Astrocyte of the cerebellum (primary cell): ENCODE measurements at regions of chr2 and their contacts with region 1.

Region 1: GRCh38 chr2:197297772-197298318 is 12.7 kb downstream of the ANKRD44 start:
- DNase-seq: no peak
- H3K4me3 ChIP-seq: no peak overlapping the region
- CTCF ChIP-seq: no peak

Region 2: DNA sequence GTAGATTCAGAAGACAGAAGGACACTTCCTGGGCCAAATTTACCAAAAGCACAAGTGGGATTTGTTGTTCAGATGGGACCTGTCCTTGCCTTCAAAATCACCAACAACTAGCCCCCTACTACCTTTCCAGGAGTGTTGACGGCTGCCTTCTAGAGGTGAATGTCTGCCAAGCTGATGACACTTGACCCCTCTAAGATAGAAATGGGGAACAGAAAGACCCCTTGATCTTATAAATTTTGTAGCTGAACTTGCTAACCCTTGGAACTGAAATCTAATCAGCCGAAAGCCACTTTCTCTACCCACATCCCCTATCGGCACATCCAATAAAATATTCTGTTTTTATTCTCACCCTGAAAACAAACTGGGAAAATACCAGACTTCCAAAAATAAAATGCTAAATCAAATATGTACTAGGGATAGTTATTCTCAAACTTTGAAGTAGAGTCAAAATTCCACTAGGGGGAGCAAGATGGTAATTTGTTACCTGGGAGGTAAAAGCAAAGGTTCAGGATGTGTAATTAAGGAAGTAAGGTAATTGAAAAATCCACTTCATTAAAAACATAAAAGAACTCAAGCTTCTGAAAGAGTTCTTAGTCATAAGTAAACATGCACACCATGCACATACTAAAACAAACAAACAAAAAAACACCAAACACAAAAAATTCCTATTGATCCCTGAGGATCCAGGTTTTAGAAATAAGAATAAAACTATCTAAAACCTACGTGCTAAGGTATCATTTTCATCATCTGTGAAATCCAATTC is 106.5 kb before region 1 on chr2:
- in situ Hi-C with region 1: loop called (anchors 5 kb)
- DNase-seq: peak; percentile 27
- H3K4me3 ChIP-seq: no peak overlapping the region
- CTCF ChIP-seq: peak; percentile 46